HEK293 (cell line): ENCODE measurements at regions of chr1 and their contacts with region 1.

Region 1: DNA sequence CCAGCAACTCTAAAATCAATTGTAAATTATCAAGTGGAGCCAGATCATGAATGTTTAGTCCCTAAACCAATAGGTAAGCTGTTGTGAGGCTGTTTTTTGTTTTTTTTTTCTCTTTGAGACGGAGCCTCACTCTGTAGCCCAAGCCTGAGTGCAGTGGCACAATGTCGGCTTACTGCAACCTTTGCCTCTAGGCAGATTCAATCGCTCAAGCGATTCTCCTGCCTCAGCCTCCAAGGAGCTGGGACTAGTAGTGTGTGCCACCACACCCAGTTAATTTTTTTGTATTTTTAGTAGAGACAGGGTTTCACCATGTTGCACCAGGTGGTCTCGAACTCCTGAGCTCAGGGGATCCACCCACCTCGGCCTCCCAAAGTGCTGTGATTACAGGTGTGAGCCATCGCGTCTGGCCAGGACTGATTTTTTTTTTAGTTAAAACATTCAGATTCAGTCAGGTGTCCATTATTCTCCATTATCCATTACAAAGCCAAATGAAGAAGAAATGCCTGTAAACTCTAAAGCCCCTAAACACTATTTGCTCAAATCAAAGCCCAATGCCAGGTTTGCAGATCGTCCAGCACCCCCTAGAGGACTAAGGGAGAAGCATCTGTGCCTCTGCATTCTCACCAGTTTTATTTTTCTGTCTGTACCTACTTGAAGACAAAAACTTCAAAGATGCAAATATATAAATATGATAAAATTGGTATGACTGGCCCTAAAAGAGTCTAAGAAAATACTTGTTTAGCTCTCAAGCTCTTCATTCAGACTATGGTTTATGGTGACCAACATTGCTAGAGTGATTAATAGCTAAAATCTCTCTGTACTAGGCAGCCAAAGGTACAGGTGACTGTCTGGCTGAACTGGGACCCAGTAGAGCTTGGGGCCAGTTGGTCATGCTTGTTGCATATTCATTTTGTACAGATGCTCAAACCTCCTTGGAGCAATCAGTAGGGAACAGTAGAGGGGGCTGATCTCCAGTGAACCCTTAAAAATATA is 138.6 kb downstream of the SYT2 start:
- H3K4me3 ChIP-seq: no peak overlapping the region
- H3K27ac ChIP-seq: no peak overlapping the region
- H3K4me1 ChIP-seq: no peaks in the 10 kb centered on the region
- CTCF ChIP-seq: peak; percentile 24; the same call in 1 of the 2 replicates

Region 2: DNA sequence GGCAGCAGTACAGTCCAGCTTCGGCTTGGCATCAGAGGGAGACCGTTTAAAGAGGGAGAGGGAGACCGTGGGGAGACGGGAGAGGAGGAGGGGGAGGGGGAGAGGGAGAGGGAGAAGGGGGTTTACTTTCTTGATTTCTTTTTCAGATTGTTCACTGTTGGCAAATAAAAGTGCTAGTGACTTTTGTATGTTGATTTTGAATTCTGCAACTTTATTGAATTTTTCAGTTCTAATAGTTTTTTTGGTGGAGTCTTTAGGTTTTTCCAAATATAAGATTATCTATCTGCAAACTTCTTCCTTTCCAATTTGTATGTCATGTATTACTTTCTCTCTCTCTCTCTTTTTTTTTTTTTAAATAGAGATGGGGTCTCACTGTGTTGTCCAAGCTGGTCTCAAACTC is 119.2 kb before region 1 on chr1:
- CTCF ChIA-PET with region 1: no interaction called
- POLR2A ChIA-PET with region 1: no interaction called
- H3K4me3 ChIP-seq: no peak overlapping the region
- H3K27ac ChIP-seq: no peak overlapping the region
- H3K4me1 ChIP-seq: no peaks in the 10 kb centered on the region
- CTCF ChIP-seq: no peak

Region 3: DNA sequence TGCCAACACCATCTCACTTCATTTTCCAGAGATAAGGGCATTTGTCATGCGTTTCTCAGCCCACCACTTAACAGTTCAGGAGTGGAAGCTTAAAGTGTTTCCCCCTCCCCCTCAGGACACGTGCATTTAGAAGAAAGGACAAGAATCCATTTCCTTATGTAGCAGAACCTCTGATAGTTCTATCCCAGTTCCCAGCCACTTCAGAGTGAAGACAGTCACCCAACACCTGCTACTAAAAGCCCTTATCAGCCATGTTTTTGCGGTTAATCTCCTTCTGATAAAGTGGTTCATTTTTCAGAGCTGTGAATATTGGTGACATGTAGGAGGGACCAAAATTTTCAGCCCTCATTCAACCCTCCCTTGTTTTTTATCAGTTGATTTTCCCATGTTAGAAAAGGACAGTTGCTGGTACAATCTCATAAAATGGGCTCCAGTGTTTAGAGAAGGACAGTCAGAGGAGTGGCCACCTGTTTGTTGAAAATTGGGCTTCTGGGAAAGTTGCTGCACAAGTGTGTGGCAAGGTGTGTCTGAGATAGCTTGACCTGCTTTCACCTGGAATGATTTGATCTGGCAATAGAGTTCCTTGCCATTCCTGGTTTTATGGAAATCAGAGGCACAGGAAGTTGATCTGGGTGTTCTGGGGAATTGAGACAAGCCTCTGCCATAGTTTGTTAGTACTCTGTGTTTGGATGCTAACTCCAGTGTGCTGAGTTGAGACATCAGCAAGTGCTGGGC is 109.1 kb before region 1 on chr1:
- CTCF ChIA-PET with region 1: interaction called, 12 read pairs
- POLR2A ChIA-PET with region 1: no interaction called
- H3K4me3 ChIP-seq: no peak overlapping the region
- H3K27ac ChIP-seq: no peak overlapping the region
- H3K4me1 ChIP-seq: peaks cover 12% of the 10 kb centered on the region
- CTCF ChIP-seq: no peak

Region 4: GRCh38 chr1:202501281-202501680 is 70.4 kb before region 1 on chr1:
- CTCF ChIA-PET with region 1: interaction called, 20 read pairs
- POLR2A ChIA-PET with region 1: no interaction called
- H3K4me3 ChIP-seq: no peak overlapping the region
- H3K27ac ChIP-seq: no peak overlapping the region
- H3K4me1 ChIP-seq: peaks cover 4% of the 10 kb centered on the region
- CTCF ChIP-seq: peak; percentile 50; the same call in 1 of the 2 replicates

Region 5: DNA sequence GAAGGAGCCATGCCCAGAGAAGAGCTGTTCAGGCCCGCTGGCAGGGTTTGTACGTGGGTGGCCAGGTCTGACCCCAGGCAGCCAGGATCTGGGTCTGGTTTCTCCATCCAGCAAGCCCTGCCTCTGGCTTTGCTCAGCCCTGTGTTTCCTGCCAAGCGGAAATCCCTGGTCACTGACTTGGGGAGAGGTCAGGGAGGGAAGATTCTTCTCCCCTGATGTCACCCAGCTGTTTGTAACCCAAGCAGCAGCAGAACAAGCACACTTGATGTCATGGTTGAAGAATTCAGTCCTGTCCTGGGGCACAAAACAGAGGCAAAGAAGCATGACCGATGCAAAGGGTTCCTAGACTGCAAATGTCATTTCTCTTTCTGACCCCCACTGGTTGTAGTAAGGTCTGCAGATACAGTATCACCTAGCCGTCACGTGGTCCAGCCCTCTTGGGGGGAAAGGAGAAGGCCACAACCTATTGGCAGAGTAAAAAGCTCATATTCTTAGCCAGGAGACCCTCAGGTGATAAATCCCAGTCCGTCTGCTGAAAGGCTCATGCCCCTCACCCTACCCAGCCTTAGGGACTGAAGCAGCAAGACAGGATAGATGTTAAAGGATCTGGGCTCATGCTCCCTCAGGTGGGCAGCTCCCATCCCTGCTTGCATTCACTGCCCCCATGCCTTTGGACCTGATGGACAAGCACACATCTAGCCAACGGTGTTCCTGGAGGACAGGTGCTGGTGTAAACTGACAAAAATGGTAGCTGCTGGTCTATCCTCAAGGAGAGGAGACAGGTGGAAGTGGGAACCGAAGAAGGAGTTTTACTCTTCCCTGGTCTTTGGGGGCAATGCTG is 17.8 kb after region 1 on chr1:
- CTCF ChIA-PET with region 1: interaction called, 20 read pairs
- POLR2A ChIA-PET with region 1: no interaction called
- H3K4me3 ChIP-seq: no peak overlapping the region
- H3K27ac ChIP-seq: no peak overlapping the region
- H3K4me1 ChIP-seq: peaks cover 5% of the 10 kb centered on the region; the same call in 1 of the 2 replicates
- CTCF ChIP-seq: no peak

Region 6: DNA sequence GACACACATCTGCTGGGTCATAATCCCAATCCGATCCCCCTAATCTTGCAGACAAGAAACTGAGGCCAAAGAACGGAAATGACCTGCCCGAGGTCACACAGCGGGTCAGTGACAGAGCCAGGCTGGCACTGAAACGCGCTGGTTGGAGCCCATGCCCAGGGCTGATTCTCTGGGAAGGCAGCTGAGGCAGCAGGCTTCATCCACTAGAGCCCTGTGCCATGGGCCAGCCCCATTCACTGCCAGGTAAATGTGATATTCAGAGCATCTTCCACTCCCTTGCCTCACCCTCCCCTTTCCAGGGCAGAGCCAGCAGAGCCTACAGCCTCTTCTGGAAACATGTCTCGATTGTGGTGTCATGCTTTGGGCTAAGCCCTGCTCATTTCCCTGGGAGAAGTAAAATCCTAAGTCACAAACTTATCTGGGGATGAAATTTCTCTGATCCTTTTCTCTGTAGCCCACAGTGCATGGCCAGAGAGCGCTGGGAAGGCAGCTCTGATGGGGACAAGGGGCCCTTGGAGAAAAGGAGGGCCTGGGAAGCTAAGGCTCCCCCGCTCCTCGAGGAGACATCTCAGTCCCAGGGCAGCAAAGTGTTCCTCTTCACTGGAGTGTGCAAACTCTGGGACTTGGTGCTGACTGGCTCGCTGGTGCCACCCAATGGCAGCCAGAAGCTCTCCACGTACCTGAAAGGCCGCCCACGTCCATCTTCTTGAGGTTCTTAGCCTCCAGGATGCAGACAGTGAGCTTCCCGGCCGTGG is 28.2 kb after region 1 on chr1:
- CTCF ChIA-PET with region 1: interaction called, 13 read pairs
- POLR2A ChIA-PET with region 1: interaction called, 3 read pairs
- H3K4me3 ChIP-seq: no peak overlapping the region
- H3K27ac ChIP-seq: no peak overlapping the region
- H3K4me1 ChIP-seq: no peaks in the 10 kb centered on the region
- CTCF ChIP-seq: peak; percentile 82

Region 7: DNA sequence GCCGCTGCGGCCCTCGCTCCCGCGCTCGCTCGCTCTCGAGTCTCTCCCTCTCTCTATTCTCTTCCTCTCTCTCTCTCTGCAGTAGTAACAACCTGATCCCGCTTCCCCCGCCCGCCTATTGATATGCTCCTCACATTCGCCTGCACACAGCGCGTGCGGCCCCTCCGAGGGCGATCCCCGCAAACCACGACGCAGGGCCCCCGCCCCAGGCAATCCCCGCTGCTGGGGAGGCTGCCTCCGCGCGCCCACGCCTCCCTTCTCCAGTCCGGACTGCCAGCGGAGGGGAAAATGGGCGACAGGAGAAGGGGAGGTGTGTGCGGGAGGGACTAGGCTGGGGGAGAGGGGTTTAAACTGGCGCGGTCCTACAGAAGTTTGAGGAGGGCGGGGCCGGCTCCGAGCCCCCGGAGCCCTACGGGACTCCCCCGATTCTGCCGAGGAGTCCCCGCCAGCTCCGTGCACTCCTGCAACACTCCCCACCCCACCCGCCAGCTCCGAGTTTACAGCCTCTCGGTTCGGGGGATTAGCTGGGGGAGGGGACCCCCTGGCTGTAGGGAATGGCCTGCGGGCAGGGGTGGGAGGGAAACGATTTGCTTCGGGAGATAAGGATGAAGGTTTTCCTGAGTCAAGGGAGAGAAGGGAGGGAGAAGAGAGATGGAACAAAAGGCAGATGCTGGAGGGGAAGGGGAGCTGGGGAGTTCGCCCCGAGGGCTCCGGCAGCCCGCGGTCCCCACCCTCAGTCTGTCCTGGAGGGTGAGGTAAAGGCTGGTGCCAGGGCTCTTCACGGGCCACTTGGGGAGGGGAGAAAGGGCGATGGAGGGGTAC is 72.0 kb after region 1 on chr1:
- CTCF ChIA-PET with region 1: no interaction called
- POLR2A ChIA-PET with region 1: no interaction called
- H3K4me3 ChIP-seq: peak overlapping the region; percentile 44
- H3K27ac ChIP-seq: no peak overlapping the region; the same call in 1 of the 2 replicates
- H3K4me1 ChIP-seq: no peaks in the 10 kb centered on the region; the same call in 1 of the 2 replicates
- CTCF ChIP-seq: no peak